ENCODE measurements at regions of chr11 and their contacts with region 1.

Region 1: GRCh38 chr11:3849297-3849874 is 6.1 kb upstream of the STIM1 start:
- H3K4me3 ChIP-seq: no peak overlapping the region
- H3K27ac ChIP-seq: no peak overlapping the region
- H3K4me1 ChIP-seq: no peaks in the 10 kb centered on the region
- CTCF ChIP-seq: no peak

Region 2: DNA sequence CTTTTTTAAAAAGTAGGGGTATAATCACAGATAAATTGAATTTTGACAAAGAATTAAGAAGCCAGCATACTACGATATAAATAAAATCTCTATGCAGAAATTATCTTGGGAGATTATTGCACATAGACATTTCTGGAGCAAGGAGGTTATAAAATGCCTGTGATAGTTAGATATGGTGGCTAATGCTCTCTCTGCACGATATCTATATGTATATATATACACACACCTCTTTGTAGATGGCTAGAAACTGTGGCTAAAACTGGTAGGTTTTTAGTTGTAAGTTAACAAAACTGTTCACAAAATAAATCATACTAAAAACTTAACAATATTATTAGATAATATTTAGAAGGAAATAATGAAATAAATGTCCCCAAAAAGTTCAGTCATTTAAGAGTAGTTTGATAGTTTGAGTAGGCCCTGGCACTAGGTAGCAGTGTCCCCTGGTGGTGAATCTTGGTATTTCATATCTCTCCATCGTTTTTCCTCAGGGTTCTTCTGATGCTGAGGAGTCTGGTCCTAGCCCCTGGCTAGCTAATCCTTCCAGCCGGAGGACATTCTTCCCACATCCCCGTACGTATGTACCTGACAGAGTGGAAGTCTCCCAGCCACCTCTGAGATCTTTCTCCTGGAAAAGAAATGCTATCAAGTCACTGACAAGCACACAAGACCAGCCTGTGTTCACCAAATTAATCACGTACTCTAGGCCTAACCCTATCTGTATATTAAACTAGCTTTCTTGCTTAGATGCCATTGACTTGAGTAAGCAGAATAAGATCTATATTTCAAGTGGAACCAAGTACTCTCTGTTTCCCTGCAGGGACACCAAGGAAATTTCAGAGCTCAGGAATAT is 239.7 kb before region 1 on chr11:
- CTCF ChIA-PET with region 1: no interaction called
- POLR2A ChIA-PET with region 1: no interaction called
- H3K4me3 ChIP-seq: no peak overlapping the region
- H3K27ac ChIP-seq: no peak overlapping the region
- H3K4me1 ChIP-seq: no peaks in the 10 kb centered on the region
- CTCF ChIP-seq: peak; percentile 33; the same call in 1 of the 2 replicates

Region 3: GRCh38 chr11:3747684-3748083 is 101.7 kb before region 1 on chr11:
- CTCF ChIA-PET with region 1: no interaction called
- POLR2A ChIA-PET with region 1: no interaction called
- H3K4me3 ChIP-seq: no peak overlapping the region
- H3K27ac ChIP-seq: no peak overlapping the region
- H3K4me1 ChIP-seq: no peaks in the 10 kb centered on the region
- CTCF ChIP-seq: no peak

Region 4: DNA sequence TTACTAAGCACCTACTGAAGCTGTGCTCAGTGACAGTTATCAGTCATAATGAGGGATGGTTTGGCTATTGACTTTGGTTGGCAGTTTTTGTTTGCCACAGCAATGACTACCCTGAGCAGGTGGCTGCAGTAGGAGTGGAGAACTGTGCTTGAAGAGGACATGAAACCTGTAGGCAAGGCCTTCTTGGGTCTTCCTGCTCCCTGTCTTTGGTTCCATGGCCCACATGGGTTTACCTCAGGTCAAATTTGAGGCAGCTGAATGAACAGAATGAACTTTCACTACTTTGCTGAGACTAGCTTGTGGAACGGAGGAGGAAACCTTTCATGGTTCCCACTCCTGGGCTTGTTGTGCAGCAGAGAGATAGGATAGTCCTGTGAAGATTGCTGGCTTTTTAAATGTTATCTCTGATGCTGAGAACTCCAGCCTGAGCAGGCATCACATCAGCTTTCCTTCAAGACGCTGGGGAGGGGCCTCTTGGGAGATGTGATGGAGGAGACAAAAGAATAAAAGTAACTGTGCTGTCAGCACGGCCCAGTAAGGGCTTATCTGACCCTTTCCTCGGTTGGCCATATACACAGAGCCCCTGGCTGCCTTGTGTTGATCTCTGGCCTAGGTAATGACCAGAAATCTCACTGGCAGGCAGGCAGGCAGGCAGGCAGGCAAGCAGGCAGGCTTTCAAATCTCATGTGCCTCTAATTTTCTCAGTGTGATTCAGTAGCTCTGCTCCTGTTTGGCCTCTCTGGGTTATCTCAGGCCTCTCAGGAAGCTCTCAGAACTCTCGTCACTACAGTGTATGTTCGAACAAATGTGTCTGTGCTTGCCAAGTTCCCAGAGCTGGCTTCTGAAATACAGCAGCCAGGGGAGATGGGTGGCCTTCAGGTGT is 18.1 kb after region 1 on chr11:
- CTCF ChIA-PET with region 1: interaction called, 95 read pairs
- POLR2A ChIA-PET with region 1: interaction called, 4 read pairs
- H3K4me3 ChIP-seq: no peak overlapping the region
- H3K27ac ChIP-seq: no peak overlapping the region
- H3K4me1 ChIP-seq: peaks cover 4% of the 10 kb centered on the region; the same call in 1 of the 2 replicates
- CTCF ChIP-seq: no peak

Region 5: GRCh38 chr11:3877364-3878257 is 28.2 kb after region 1 on chr11:
- CTCF ChIA-PET with region 1: interaction called, 95 read pairs
- POLR2A ChIA-PET with region 1: interaction called, 5 read pairs
- H3K4me3 ChIP-seq: no peak overlapping the region
- H3K27ac ChIP-seq: no peak overlapping the region
- H3K4me1 ChIP-seq: no peaks in the 10 kb centered on the region; the same call in 1 of the 2 replicates
- CTCF ChIP-seq: no peak

Region 6: GRCh38 chr11:4087551-4087950 is 238.2 kb after region 1 on chr11:
- CTCF ChIA-PET with region 1: interaction called, 22 read pairs
- POLR2A ChIA-PET with region 1: no interaction called
- H3K4me3 ChIP-seq: no peak overlapping the region
- H3K27ac ChIP-seq: no peak overlapping the region
- H3K4me1 ChIP-seq: no peaks in the 10 kb centered on the region
- CTCF ChIP-seq: no peak